H1 (cell line): ENCODE measurements at regions of chr16 and their contacts with region 1.

Region 1: GRCh38 chr16:29909391-29909790 is 9.1 kb downstream of the ASPHD1 start:
- DNase-seq: no peak
- H3K4me3 ChIP-seq: no peak overlapping the region
- H3K27ac ChIP-seq: no peak overlapping the region
- H3K4me1 ChIP-seq: peaks cover 0 to 6% (median 2%) of the 10 kb centered on the region in 4 experiments; a peak in 3 of 7 replicates
- H3K27me3 ChIP-seq: no peaks in the 10 kb centered on the region
- CTCF ChIP-seq: no peak
- EP300 ChIP-seq: no peak
- POLR2A ChIP-seq: no peak
- RAD21 ChIP-seq: no peak

Region 2: GRCh38 chr16:29858149-29858849 is 51.1 kb before region 1 on chr16:
- CTCF ChIA-PET with region 1: no interaction called
- POLR2A ChIA-PET with region 1: no interaction called
- DNase-seq: no peak
- H3K4me3 ChIP-seq: no peak overlapping the region
- H3K27ac ChIP-seq: no peak overlapping the region
- H3K4me1 ChIP-seq: no peaks in the 10 kb centered on the region
- H3K27me3 ChIP-seq: no peaks in the 10 kb centered on the region
- CTCF ChIP-seq: no peak
- EP300 ChIP-seq: no peak
- POLR2A ChIP-seq: no peak
- RAD21 ChIP-seq: no peak

Region 3: GRCh38 chr16:29920288-29921033 is 11.1 kb after region 1 on chr16:
- CTCF ChIA-PET with region 1: interaction called, 12 read pairs
- POLR2A ChIA-PET with region 1: interaction called, 25 read pairs
- DNase-seq: no peak
- H3K4me3 ChIP-seq: no peak overlapping the region
- H3K27ac ChIP-seq: no peak overlapping the region
- H3K4me1 ChIP-seq: 0 out of 7 replicates have a peak, but pooled peaks cover 0 to 2% (median 0%) of the 10 kb centered on the region in 4 experiments
- H3K27me3 ChIP-seq: no peaks in the 10 kb centered on the region
- CTCF ChIP-seq: no peak
- EP300 ChIP-seq: no peak
- POLR2A ChIP-seq: no peak
- RAD21 ChIP-seq: no peak

Region 4: DNA sequence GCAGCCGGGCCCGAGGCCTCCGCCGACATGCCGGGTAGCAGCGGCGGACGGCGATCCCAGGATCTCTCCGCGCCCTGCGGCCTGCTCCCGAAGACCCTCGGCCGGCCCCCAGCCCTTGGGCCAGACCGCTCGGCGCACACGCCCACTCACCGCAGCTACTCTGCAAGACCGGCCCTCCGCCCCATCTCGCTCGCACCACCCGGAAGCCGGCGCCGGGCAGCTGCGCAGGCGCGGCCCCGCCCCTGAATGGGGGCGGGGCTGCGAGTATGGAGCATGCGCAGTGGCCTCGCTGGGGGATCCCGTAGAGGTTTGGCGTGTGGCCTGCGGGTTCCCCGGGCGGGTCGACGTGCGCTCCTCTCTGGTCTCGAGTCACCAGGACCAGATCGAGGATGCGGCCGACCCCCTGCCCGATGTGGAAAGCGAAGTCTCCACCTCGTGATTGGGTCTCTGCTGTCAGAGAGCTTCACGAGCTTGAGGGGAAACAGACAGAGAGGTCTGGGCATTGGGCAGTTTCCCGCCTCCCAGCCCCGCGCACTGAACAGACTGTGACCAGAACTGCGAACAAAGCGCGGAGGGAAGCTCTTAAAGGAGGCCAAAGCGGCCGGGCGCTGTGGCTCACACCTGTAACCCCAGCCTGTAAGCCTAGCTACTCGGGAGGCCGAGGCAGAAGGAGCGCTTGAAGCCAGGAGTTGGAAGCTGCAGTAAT is 16.8 kb after region 1 on chr16 and contains the start of gene KCTD13:
- CTCF ChIA-PET with region 1: interaction called, 12 read pairs
- POLR2A ChIA-PET with region 1: interaction called, 25 read pairs
- DNase-seq: peak; percentile 62 to 98
- H3K4me3 ChIP-seq: peak within 1 kb of the TSS; percentile 62 to 89 (median 85)
- H3K27ac ChIP-seq: peak within 1 kb of the TSS; percentile 86
- H3K4me1 ChIP-seq: peaks cover 0 to 8% (median 0%) of the 10 kb centered on the region in 4 experiments; a peak in 2 of 7 replicates
- H3K27me3 ChIP-seq: no peaks in the 10 kb centered on the region
- CTCF ChIP-seq: 0 out of 4 replicates have a peak, but pooled peaks of 1 of the 3 experiments have one; percentile 2
- EP300 ChIP-seq: no peak
- POLR2A ChIP-seq: peak; percentile 62 to 90
- RAD21 ChIP-seq: no peak
- total RNA-seq, gene KCTD13: 10.8 and 12.3 TPM in 2 replicates

Region 5: DNA sequence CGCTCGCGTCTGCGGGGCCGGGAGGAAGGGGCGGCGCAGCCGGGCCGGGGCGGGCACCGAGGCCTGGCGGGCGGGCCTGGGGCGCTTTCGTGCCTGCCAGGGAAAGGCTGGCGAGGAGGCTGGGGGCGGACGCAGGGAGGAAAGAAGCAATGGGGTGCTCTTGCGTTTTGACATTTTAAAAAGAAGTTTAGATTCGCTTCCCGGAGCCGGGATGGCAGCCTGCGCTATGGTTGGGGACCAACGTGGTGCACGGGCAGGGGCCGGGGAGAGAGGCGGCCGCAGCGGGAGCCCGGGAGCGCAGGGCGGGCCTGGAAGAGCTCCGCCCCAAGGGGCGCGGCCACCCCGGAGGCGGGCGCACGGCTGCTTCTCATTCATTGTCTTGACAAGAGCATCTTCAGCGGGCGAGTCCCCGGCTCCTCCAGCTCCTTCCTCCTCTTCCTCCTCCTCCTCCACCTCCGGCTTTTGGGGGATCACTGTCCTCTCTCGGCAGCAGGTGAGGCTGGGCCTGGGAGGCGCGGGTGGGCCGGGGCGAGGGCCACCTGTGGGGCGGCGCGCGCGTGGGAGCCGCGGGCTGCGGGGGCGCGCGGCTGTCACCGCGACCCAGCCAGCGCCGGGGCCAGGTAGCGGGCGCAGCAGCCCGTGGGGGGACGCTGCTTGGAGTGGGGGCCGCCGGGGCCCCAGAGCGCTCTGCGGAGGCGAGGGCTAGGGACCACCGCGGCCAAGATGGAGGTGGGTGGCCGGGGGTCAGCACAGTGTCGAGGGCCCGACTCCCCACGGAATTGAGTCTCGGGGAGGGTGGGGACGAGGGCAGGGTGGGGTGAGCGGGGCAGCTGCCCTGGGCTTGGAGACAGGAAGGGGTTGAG is 274.1 kb after region 1 on chr16 and contains the start of gene CORO1A:
- CTCF ChIA-PET with region 1: no interaction called
- POLR2A ChIA-PET with region 1: no interaction called
- DNase-seq: peak in 1 of 2 experiments; percentile 91
- H3K4me3 ChIP-seq: peak within 1 kb of the TSS; percentile 50 to 69 (median 54)
- H3K27ac ChIP-seq: no peak within 1 kb of the TSS
- H3K4me1 ChIP-seq: peaks cover 0 to 12% (median 4%) of the 10 kb centered on the region in 4 experiments; a peak in 4 of 7 replicates
- H3K27me3 ChIP-seq: peaks cover 0 to 22% (median 12%) of the 10 kb centered on the region in 4 experiments; a peak in 4 of 7 replicates
- CTCF ChIP-seq: no peak
- EP300 ChIP-seq: no peak
- POLR2A ChIP-seq: no peak; a peak in 1 of 3 replicates
- RAD21 ChIP-seq: no peak
- total RNA-seq, gene CORO1A: 11.7 and 12.1 TPM in 2 replicates